Right lobe of liver (tissue), 6 donors: ENCODE measurements at regions of chr14 and their contacts with region 1.

Region 1: DNA sequence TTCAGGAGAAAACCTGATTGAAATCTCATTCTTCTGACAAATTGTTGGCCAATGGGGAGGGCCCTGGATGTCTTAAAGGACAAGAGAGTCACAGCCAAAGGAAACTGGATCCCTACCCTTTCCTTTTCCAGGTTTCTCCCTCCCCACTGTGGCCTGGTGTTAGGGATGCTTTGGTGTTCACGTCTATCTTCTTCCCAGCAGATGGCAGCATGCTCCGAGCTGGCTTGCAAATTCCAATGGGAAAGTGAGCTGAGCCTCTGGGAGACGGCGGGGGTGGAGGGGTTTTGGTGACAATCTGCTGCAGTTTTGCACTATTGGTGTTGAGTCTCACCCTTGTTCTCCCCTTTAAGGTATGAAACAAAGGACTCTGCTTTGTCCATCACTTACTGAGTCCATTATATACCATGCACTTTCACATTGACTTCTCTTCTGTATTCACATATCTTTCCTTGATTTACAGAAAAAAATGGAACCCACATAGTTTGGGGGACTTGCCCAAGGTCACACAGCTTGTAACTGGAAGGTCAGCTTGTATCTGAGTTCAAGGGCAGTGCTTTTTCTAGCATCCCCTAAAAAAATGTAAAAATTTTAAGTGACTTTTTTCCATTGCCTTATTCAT is 39.3 kb downstream of the CCDC177 start:
- DNase-seq: peak in 1 of 3 donors; percentile 57
- ATAC-seq: peak; percentile 66 to 88 (median 78)
- H3K4me3 ChIP-seq: no peak overlapping the region
- H3K27ac ChIP-seq: no peak overlapping the region
- H3K4me1 ChIP-seq: peaks cover 0 to 2% (median 1%) of the 10 kb centered on the region in 4 donors
- H3K27me3 ChIP-seq: no peaks in the 10 kb centered on the region
- CTCF ChIP-seq: peak; percentile 50 to 76 (median 70)
- POLR2A ChIP-seq: no peak

Region 2: DNA sequence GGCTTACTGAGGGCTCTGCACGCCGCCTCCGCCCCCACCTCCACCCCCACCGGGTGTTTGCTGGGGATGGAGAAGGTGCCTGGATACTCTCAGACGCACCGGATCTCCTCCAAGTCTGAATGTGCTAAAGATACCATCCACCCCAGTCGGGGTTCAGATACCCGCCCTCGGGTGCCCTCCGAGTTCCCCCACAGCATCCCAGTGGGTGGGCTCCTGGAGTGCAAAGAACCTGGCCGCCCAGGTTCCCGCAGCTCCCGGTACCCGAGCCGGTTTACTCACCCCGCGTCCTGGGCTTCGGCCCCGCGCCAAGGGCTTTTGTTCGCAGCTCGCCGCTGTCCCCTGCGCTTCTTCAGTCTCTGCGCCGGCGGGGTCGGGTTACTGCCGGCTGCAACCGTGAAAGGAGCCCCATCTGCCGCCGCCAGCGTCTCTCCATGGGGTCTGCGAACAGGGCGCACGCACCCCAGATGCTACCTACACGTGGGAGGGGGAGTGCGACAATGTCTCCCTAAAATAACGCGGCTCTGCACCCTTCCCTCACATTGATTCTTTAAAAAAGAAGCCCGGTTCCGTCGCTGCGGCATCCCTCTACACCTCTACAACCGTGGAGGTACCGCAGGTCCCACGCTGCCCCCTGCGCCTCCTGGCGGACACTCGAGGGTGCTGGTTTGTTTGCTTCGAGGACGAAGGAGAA is 39.1 kb after region 1 on chr14 and contains the start of gene CCDC177:
- intact Hi-C with region 1: loop called (anchors 5 kb)
- DNase-seq: peak; percentile 56 to 66 (median 66)
- ATAC-seq: peak; percentile 65 to 73 (median 70)
- H3K4me3 ChIP-seq: no peak within 1 kb of the TSS
- H3K27ac ChIP-seq: no peak within 1 kb of the TSS
- H3K4me1 ChIP-seq: peaks cover 0 to 21% (median 0%) of the 10 kb centered on the region in 4 donors
- H3K27me3 ChIP-seq: peaks cover 0 to 12% of the 10 kb centered on the region in 2 donors
- CTCF ChIP-seq: peak; percentile 68 to 93 (median 86)
- POLR2A ChIP-seq: no peak
- total RNA-seq, gene CCDC177: 0.06 to 0.11 (median 0.07) TPM in 3 of 6 experiments, not detected in the others

Region 3: DNA sequence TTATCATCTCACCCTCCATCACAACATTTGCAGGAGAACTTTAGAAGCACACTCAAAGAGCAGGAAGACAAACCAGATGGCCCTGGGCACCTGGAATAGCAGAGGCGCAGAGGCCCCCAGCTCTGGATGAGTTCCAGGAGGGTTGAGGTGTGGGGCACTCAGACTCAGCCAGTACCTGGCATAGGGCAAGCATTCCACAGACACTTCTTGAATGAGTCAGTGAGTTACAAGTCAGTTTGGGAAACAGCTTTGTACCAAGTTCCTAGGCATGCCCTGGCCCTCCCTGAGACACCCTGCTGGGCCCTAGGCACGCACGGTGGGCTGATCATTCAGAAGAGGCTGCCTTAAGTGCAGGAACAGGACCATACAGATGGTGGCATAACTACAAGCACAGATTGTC is 1219.7 kb after region 1 on chr14:
- intact Hi-C with region 1: no loop called
- DNase-seq: peak in 1 of 3 donors; percentile 41
- ATAC-seq: peak in 3 of 4 donors; percentile 16 to 63 (median 18)
- H3K4me3 ChIP-seq: no peak overlapping the region
- H3K27ac ChIP-seq: no peak overlapping the region
- H3K4me1 ChIP-seq: peaks cover 0 to 19% (median 9%) of the 10 kb centered on the region in 4 donors
- H3K27me3 ChIP-seq: no peaks in the 10 kb centered on the region
- CTCF ChIP-seq: no peak
- POLR2A ChIP-seq: no peak